AG04449 (cell line): ENCODE measurements at regions of chr1 and their contacts with region 1.

Region 1: DNA sequence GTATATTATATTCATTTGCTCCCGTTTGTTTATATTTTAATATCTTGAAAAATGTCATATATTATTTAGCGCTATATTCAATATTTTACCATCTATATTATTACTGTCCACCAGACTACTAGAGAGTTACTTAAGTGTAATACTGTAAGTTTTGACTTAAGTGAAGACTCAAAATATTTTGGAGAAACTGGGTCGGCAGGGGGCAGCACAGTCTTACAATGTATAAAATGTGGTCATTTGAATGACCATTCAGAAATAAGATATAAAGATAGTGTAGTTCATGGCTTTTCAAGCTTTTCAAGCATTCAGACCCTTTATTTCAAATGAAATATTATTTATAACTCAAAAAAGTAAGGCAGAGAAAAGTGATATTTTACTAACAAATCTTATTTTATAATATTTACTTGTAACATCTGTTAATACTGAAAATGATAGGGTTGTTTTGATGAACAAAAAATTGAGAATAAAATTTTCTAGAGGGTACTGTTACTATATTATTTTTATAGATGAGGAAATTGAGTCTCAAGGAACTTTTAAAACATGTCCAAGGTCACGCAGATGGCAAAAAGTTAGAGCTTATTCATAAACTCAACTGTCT is 89.0 kb upstream of the SERTAD4 start:
- DNase-seq: peak; percentile 23
- H3K4me3 ChIP-seq: no peak overlapping the region
- CTCF ChIP-seq: peak; percentile 39

Region 2: GRCh38 chr1:210117198-210117597 is 26.4 kb before region 1 on chr1:
- CTCF ChIA-PET with region 1: no interaction called
- POLR2A ChIA-PET with region 1: no interaction called
- DNase-seq: no peak
- H3K4me3 ChIP-seq: no peak overlapping the region
- CTCF ChIP-seq: no peak

Region 3: DNA sequence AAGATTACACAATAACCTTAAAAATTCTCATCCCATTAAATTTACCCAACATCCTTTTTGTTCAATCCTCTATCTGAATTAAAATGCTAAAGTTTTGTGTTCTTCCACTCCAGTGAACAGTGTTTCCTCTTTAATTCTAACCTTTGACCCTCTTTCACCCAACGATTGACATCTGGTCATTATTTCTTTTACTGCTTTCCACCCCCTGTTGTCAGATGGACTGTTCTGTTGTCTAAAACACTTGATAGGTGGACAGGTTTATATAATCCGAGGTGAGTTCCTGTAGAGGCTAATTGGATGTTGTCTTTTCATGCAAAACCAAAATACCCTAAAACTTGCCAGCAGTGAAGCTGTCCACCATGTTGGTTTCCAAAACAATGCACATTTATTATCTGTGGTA is 15.6 kb after region 1 on chr1:
- CTCF ChIA-PET with region 1: interaction called, 20 read pairs
- POLR2A ChIA-PET with region 1: no interaction called
- DNase-seq: no peak
- H3K4me3 ChIP-seq: no peak overlapping the region
- CTCF ChIP-seq: no peak

Region 4: GRCh38 chr1:210301615-210302000 is 158.0 kb after region 1 on chr1:
- CTCF ChIA-PET with region 1: interaction called, 150 read pairs
- POLR2A ChIA-PET with region 1: no interaction called
- DNase-seq: no peak
- H3K4me3 ChIP-seq: no peak overlapping the region
- CTCF ChIP-seq: no peak

Region 5: GRCh38 chr1:210360852-210361477 is 217.4 kb after region 1 on chr1:
- CTCF ChIA-PET with region 1: interaction called, 24 read pairs
- POLR2A ChIA-PET with region 1: no interaction called
- DNase-seq: peak; percentile 37
- H3K4me3 ChIP-seq: no peak overlapping the region
- CTCF ChIP-seq: peak; percentile 60